ENCODE measurements at regions of chr9 and their contacts with region 1.

Region 1: GRCh38 chr9:33130508-33130911 is 36.6 kb downstream of the B4GALT1 start:
- DNase-seq: peak; percentile 22
- ATAC-seq: peak; percentile 58
- H3K4me3 Mint-ChIP-seq: peak overlapping the region; percentile 70
- H3K27ac Mint-ChIP-seq: peak overlapping the region; percentile 96
- H3K4me1 Mint-ChIP-seq: peaks cover 95% of the 10 kb centered on the region
- H3K27me3 Mint-ChIP-seq: no peaks in the 10 kb centered on the region
- CTCF ChIP-seq: no peak

Region 2: DNA sequence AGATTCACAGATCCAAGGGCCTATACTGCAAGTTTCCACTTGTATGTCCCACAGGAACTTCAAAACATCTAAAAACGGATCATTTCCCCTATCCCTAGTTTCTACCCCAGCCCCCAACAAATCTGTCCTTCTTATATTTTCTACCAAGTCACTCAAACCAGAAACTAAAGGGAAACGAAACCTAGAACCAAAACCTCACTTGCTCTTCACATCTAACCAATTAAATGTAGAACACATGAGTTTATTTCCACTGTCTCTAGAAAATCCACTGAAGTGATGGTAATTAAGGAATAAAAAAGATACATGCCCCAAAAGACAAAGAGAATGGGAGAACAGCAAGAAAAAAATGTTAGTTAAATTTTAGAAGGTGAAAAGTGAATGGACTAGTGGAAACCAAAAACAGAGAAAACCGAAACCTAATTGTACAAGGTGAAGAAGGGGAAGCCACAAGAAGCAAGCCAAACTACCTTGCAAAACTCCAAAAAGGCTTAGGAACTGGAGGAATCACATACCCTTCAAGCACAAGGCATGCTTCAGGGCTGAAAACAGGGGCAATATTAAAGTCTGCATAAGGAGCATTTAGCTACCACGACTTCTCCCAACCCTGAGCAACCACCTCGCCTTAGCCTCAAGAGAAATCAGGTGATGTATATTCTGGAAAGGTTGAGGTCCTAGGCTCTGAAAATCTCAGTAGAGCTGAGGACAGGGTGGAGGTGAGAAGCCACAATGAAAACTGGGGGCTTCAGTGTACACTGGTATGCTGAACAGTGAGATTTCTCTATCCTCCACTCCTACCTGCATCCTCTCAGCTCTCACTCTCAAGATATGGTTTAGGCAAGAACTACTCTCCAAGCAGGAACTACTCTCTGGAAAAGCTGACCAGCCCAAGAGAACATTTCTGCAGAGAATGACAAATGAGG is 65.1 kb before region 1 on chr9:
- CTCF ChIA-PET with region 1: no interaction called
- POLR2A ChIA-PET with region 1: no interaction called
- intact Hi-C with region 1: no loop called
- DNase-seq: no peak
- ATAC-seq: peak; percentile 68
- H3K4me3 Mint-ChIP-seq: peak overlapping the region; percentile 52
- H3K27ac Mint-ChIP-seq: peak overlapping the region; percentile 83
- H3K4me1 Mint-ChIP-seq: peaks cover 17% of the 10 kb centered on the region
- H3K27me3 Mint-ChIP-seq: no peaks in the 10 kb centered on the region
- CTCF ChIP-seq: no peak

Region 3: GRCh38 chr9:33082538-33083326 is 47.8 kb before region 1 on chr9:
- CTCF ChIA-PET with region 1: interaction called, 9 read pairs
- POLR2A ChIA-PET with region 1: interaction called, 12 read pairs
- intact Hi-C with region 1: no loop called
- DNase-seq: no peak
- ATAC-seq: peak; percentile 37
- H3K4me3 Mint-ChIP-seq: peak overlapping the region; percentile 61
- H3K27ac Mint-ChIP-seq: peak overlapping the region; percentile 84
- H3K4me1 Mint-ChIP-seq: peaks cover 15% of the 10 kb centered on the region
- H3K27me3 Mint-ChIP-seq: no peaks in the 10 kb centered on the region
- CTCF ChIP-seq: no peak

Region 4: DNA sequence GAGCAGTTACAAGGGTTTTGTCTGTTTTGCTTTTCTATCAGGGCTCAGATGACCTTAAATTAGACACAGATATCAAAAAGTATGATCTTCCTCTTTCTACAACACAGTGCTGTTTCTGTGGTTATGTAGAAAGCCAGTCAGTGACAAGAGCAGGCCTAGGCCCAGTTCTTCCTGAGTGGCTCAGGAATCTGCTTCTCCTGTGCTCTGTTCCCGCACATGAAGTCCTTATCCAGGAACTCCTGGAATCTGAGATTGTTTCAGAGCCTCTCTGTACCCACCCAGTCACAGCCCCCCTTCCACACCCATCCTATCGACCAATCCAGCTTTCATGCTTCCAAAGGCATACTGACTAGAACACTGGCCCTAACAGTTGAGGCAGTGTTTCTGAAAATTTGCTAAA is 13.7 kb before region 1 on chr9:
- CTCF ChIA-PET with region 1: interaction called, 3 read pairs
- POLR2A ChIA-PET with region 1: interaction called, 29 read pairs
- intact Hi-C with region 1: loop called (anchors 2 kb)
- DNase-seq: no peak
- ATAC-seq: peak; percentile 86
- H3K4me3 Mint-ChIP-seq: peak overlapping the region; percentile 70
- H3K27ac Mint-ChIP-seq: peak overlapping the region; percentile 92
- H3K4me1 Mint-ChIP-seq: peaks cover 62% of the 10 kb centered on the region
- H3K27me3 Mint-ChIP-seq: no peaks in the 10 kb centered on the region
- CTCF ChIP-seq: no peak

Region 5: DNA sequence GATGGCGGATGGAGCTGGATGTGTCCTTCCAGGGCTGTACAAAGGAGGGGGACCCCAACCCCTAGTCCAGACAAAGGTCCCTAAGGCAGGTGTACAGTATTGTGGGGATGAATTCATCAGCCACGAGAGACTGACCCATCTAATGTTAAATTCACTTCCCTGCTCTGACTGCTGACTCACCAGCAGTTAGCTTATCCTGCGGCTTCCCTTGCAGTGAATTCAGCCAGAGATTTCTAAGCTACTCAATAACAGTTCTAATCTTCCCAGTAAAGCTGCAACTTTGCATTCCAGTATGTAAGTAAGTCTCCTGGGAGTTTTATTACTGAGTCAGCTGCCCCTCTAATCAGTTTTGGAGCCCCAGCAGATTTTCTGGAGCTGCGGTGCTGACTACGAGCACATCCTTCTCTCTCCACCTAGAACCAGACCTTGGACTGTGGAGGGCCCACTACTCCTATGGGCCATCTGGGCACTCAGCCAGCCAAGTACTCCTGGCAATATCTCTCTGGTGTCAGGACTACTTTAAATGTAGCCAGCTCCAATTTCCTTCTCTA is 20.6 kb after region 1 on chr9:
- CTCF ChIA-PET with region 1: interaction called, 4 read pairs
- POLR2A ChIA-PET with region 1: interaction called, 593 read pairs
- intact Hi-C with region 1: no loop called
- DNase-seq: no peak
- ATAC-seq: peak; percentile 30
- H3K4me3 Mint-ChIP-seq: peak overlapping the region; percentile 33
- H3K27ac Mint-ChIP-seq: peak overlapping the region; percentile 84
- H3K4me1 Mint-ChIP-seq: peaks cover 91% of the 10 kb centered on the region
- H3K27me3 Mint-ChIP-seq: no peaks in the 10 kb centered on the region
- CTCF ChIP-seq: no peak

Region 6: GRCh38 chr9:33184947-33185346 is 54.4 kb after region 1 on chr9:
- CTCF ChIA-PET with region 1: no interaction called
- POLR2A ChIA-PET with region 1: no interaction called
- intact Hi-C with region 1: no loop called
- DNase-seq: no peak
- ATAC-seq: no peak
- H3K4me3 Mint-ChIP-seq: no peak overlapping the region
- H3K27ac Mint-ChIP-seq: no peak overlapping the region
- H3K4me1 Mint-ChIP-seq: peaks cover 7% of the 10 kb centered on the region
- H3K27me3 Mint-ChIP-seq: peaks cover 3% of the 10 kb centered on the region
- CTCF ChIP-seq: no peak

Region 7: GRCh38 chr9:33225319-33226149 is 95.0 kb after region 1 on chr9:
- CTCF ChIA-PET with region 1: interaction called, 26 read pairs
- POLR2A ChIA-PET with region 1: interaction called, 30 read pairs
- intact Hi-C with region 1: loop called (anchors 1 kb)
- DNase-seq: no peak
- ATAC-seq: peak; percentile 33
- H3K4me3 Mint-ChIP-seq: no peak overlapping the region
- H3K27ac Mint-ChIP-seq: peak overlapping the region; percentile 4
- H3K4me1 Mint-ChIP-seq: peaks cover 51% of the 10 kb centered on the region
- H3K27me3 Mint-ChIP-seq: no peaks in the 10 kb centered on the region
- CTCF ChIP-seq: no peak

Measured in activated B cell treated with CpG ODN at 0.5 μM for 24 hours (primary cell).